Sciatic nerve (tissue), 2 donors: ENCODE measurements at regions of chr18 and their contacts with region 1.

Region 1: DNA sequence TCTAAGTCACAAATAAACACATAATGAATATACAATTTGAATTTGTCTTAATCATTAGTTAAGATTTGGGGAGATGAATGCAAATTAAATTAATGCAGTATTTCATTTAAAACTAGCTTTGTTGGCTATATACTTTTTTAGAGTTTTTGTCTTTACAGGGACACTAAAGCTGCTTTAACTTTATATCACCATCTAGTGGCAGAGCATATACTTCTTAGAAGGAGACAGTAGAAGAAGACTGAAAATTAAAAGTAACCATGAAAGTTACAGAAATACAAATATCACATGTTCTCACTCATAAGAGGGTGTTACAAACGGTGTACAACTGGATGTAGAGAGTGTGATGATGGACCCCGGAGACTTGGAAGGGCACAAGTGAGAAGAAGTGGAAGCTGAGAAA is 268.3 kb upstream of the NETO1 start:
- DNase-seq: no peak
- ATAC-seq: no peak

Region 2: GRCh38 chr18:71919211-71919610 is 1216.9 kb before region 1 on chr18:
- intact Hi-C with region 1: loop called (anchors 5 kb)
- DNase-seq: no peak
- ATAC-seq: no peak

Region 3: DNA sequence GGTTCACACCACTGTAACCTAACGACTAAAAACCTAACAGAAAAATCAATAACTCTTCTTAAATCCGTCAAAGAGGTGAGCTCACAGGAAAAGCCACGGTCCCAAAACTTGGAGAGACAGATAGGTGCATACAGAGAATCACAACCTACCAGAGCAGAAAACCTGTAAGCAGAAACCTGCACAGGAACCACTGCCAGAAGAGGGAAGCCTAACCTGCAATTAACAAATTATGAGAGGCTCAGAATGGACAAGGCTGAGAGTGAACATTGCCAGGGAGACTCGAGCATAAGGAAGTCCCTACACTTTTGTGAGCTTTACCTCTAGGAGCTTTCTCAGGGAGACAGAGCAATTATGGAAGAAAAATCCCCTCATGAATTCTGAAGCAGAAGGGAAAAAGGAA is 112.2 kb before region 1 on chr18:
- intact Hi-C with region 1: no loop called
- DNase-seq: no peak
- ATAC-seq: no peak